ENCODE measurements at regions of chr10 and their contacts with region 1.

Region 1: DNA sequence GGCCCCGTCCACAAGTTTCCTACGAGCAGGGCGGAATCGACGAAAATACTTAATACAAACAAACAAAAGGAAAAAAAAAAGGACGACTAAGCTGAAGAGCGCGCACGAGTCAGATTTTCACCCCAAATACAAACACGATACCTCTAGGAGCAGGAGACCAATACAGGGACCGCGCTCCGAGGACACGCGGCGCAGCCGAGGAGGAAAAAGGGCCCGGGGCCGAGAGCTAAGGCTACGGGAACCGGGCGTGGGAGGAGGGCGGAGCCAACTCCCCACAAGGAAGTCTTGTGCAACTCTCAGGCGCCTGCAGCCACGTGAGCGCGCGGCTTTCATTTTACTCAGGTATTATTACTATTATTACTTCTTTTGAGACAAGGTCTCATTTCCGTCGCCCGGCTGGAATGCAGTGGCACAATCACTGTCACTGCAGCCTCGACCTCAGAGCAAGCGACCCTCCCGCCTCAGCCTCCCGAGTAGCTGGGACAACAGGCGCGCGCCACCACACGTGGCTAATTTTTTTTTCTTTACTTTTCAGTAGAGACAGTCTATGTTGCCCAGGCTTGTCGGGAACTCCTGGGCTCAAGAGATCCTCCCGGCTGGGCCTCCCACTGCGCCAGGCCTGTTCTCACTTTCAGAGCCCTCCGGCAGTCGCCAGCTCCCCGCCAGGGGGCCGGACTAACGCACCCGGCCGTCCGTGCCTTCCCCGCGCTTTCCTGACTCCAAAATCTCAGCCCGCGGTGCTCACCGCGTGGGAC is 1.2 kb downstream of the HNRNPF start:
- DNase-seq: peak; percentile 67 to 91 (median 79)
- ATAC-seq: peak; percentile 48
- H3K4me3 ChIP-seq: peak overlapping the region; percentile 99
- H3K4me3 Mint-ChIP-seq: peak overlapping the region; percentile 91 to 100 (median 98)
- H3K27ac ChIP-seq: peak overlapping the region; percentile 100
- H3K27ac Mint-ChIP-seq: peak overlapping the region; percentile 97 to 99 (median 98)
- H3K4me1 ChIP-seq: peaks cover 28 to 37% of the 10 kb centered on the region in 2 donors
- H3K4me1 Mint-ChIP-seq: peaks cover 31 to 50% (median 39%) of the 10 kb centered on the region in 7 donors
- H3K27me3 ChIP-seq: no peaks in the 10 kb centered on the region
- H3K27me3 Mint-ChIP-seq: peaks cover 0 to 2% (median 0%) of the 10 kb centered on the region in 5 donors

Region 2: GRCh38 chr10:42552493-42553407 is 855.0 kb before region 1 on chr10:
- CTCF ChIA-PET with region 1: no interaction called
- POLR2A ChIA-PET with region 1: no interaction called
- intact Hi-C with region 1: loop called in 1 of 2 experiments (anchors 2 kb)
- DNase-seq: peak; percentile 83 to 92 (median 91)
- ATAC-seq: peak; percentile 98
- H3K4me3 ChIP-seq: peak overlapping the region; percentile 95
- H3K4me3 Mint-ChIP-seq: peak overlapping the region; percentile 96 to 100 (median 98)
- H3K27ac ChIP-seq: peak overlapping the region; percentile 87
- H3K27ac Mint-ChIP-seq: peak overlapping the region; percentile 86 to 98 (median 96)
- H3K4me1 ChIP-seq: peaks cover 0 to 16% of the 10 kb centered on the region in 2 donors
- H3K4me1 Mint-ChIP-seq: peaks cover 24 to 49% (median 45%) of the 10 kb centered on the region in 7 donors
- H3K27me3 ChIP-seq: no peaks in the 10 kb centered on the region
- H3K27me3 Mint-ChIP-seq: no peaks in the 10 kb centered on the region

Region 3: DNA sequence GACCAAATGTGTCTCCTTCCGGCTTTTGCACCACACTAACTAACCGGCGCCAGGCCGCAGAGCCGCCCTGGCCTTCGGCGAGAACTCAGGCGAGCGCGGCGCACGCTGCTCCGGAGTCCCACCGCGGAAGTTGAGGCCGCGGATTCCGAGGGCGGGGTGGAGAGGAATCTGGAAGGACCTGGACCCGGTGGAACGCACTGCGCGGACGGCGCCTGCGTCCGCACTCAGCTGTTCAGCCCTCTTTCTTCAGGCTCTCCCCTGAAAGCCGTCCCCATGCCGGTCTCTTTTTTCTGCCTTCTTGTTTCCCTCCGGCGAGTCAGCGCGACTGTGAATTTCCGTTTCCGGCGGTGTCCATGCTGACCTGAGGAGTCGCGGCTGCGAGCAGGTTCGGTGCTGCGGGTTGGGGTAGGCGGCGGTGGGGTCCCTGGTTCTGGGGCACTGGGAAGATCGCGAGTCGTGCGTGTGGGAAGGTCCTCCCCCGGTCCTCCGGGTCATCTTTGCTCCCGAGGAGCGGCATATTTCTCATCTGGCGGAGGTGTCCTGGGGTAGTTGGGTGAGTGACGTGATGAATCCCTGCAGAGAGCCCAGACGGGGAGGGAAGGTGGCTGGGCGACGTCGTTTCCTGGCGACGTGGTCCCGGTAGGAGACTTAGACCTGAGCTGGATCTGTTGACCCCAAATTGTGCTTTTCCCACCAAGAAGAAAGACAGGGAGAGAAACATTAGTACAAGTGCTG is 625.1 kb before region 1 on chr10 and contains the start of gene BMS1:
- CTCF ChIA-PET with region 1: no interaction called
- POLR2A ChIA-PET with region 1: no interaction called
- intact Hi-C with region 1: loop called in 1 of 2 experiments (anchors 10 kb)
- DNase-seq: peak; percentile 78 to 91 (median 86)
- ATAC-seq: peak; percentile 95
- H3K4me3 ChIP-seq: peak within 1 kb of the TSS; percentile 86
- H3K4me3 Mint-ChIP-seq: peak within 1 kb of the TSS; percentile 89 to 100 (median 96)
- H3K27ac ChIP-seq: peak within 1 kb of the TSS; percentile 83
- H3K27ac Mint-ChIP-seq: peak within 1 kb of the TSS; percentile 88 to 98 (median 94)
- H3K4me1 ChIP-seq: peaks cover 0 to 13% of the 10 kb centered on the region in 2 donors
- H3K4me1 Mint-ChIP-seq: peaks cover 10 to 60% (median 45%) of the 10 kb centered on the region in 7 donors
- H3K27me3 ChIP-seq: no peaks in the 10 kb centered on the region
- H3K27me3 Mint-ChIP-seq: peaks cover 0 to 3% (median 0%) of the 10 kb centered on the region in 5 donors
- total RNA-seq, gene BMS1: 9.7 to 20.0 (median 16.9) TPM

Region 4: DNA sequence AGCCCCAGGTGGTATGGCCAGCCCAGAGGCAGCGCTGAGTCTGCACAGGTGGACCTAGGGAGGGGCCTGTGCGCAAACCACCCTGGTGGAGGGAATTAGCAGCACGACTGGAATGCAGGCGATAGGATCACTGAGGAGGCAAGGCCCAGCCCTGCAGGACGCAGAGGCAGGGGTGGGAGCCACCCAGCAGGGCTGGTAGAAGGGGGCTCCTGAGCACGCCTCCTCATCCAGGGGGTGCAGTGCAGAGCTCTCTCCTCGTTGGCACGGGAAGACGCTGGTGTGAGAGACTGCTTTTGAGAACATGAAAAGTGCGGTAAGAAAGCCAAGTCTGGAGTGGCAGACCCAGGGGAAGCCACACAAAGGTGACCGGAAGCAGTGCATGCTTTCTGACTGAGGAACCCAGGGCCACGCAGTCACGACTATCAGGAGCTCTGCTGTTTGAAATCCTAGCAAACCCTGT is 30.3 kb before region 1 on chr10:
- CTCF ChIA-PET with region 1: no interaction called
- POLR2A ChIA-PET with region 1: no interaction called
- intact Hi-C with region 1: no loop called
- DNase-seq: no peak
- ATAC-seq: no peak
- H3K4me3 ChIP-seq: no peak overlapping the region
- H3K4me3 Mint-ChIP-seq: no peak overlapping the region
- H3K27ac ChIP-seq: no peak overlapping the region
- H3K27ac Mint-ChIP-seq: no peak overlapping the region
- H3K4me1 ChIP-seq: no peaks in the 10 kb centered on the region
- H3K4me1 Mint-ChIP-seq: peaks cover 0 to 11% (median 5%) of the 10 kb centered on the region in 7 donors
- H3K27me3 ChIP-seq: no peaks in the 10 kb centered on the region
- H3K27me3 Mint-ChIP-seq: no peaks in the 10 kb centered on the region

Region 5: DNA sequence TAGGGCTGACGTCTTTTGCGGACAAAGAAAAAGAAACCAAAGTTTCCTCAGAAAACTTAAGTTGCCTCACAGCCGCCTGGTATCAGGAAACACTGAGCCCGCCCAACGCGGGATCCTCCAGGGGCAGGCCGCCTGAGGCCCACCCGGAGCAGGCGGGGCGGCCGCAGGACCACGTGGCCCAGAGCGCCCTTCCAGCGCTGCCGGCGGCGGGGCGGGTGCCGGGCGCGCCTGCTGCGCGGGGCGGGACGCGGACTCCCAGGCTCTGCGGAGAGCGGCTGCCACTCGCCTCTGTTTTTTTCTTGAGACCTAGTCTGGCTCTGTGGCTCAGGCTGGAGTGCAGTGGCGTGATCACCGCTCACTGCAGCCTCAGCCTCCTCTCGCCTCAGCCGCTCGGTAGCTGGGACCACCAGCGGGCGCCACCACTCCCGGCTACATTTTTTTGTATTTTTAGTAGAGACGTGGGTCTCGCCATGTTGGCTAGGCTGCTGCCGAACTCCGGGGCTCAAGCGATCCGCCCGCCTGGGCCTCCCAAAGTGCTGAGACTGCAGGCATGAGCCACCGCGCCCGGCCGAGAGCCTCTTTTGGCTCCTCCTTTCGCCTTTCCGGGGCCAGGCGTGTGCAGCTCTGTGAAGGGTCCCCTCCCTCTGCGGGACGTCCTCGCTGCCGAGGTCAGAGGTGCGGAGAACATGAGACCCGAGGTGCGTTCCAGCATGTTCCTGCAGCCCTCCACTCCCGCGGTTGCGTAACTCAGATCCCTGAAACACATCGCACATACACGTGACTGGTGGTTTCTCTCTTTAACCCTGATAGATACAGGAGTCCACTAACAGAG is 12.8 kb after region 1 on chr10:
- CTCF ChIA-PET with region 1: interaction called, 9 read pairs
- POLR2A ChIA-PET with region 1: interaction called, 72 read pairs
- intact Hi-C with region 1: loop called (anchors 1 kb)
- DNase-seq: peak; percentile 69 to 86 (median 81)
- ATAC-seq: peak; percentile 94
- H3K4me3 ChIP-seq: peak overlapping the region; percentile 62
- H3K4me3 Mint-ChIP-seq: peak overlapping the region; percentile 87 to 98 (median 92)
- H3K27ac ChIP-seq: peak overlapping the region; percentile 95
- H3K27ac Mint-ChIP-seq: peak overlapping the region; percentile 91 to 99 (median 98)
- H3K4me1 ChIP-seq: peaks cover 24 to 29% of the 10 kb centered on the region in 2 donors
- H3K4me1 Mint-ChIP-seq: peaks cover 17 to 46% (median 41%) of the 10 kb centered on the region in 7 donors
- H3K27me3 ChIP-seq: no peaks in the 10 kb centered on the region
- H3K27me3 Mint-ChIP-seq: no peaks in the 10 kb centered on the region

Region 6: GRCh38 chr10:43436400-43437140 is 28.8 kb after region 1 on chr10 and contains the start of gene ZNF487:
- CTCF ChIA-PET with region 1: interaction called, 4 read pairs
- POLR2A ChIA-PET with region 1: interaction called, 26 read pairs
- intact Hi-C with region 1: loop called (anchors 1 kb)
- DNase-seq: peak; percentile 87 to 94 (median 92)
- ATAC-seq: peak; percentile 94
- H3K4me3 ChIP-seq: peak within 1 kb of the TSS; percentile 97
- H3K4me3 Mint-ChIP-seq: peak within 1 kb of the TSS; percentile 93 to 99 (median 97)
- H3K27ac ChIP-seq: peak within 1 kb of the TSS; percentile 96
- H3K27ac Mint-ChIP-seq: peak within 1 kb of the TSS; percentile 93 to 100 (median 99)
- H3K4me1 ChIP-seq: peaks cover 5% of the 10 kb centered on the region in 2 donors
- H3K4me1 Mint-ChIP-seq: peaks cover 13 to 39% (median 27%) of the 10 kb centered on the region in 7 donors
- H3K27me3 ChIP-seq: no peaks in the 10 kb centered on the region
- H3K27me3 Mint-ChIP-seq: no peaks in the 10 kb centered on the region
- total RNA-seq, gene ZNF487: 4.1 to 12.0 (median 5.9) TPM